Transverse colon (tissue), 4 donors: ENCODE measurements at regions of chr11 and their contacts with region 1.

Region 1: GRCh38 chr11:65919146-65920033 is at the start of gene DRAP1:
- DNase-seq: peak; percentile 99
- H3K4me3 ChIP-seq: peak within 1 kb of the TSS; percentile 84 to 98 (median 91)
- H3K27ac ChIP-seq: peak within 1 kb of the TSS; percentile 96 to 98 (median 96)
- H3K4me1 ChIP-seq: peaks cover 34 to 49% (median 46%) of the 10 kb centered on the region in 4 donors
- H3K27me3 ChIP-seq: no peaks in the 10 kb centered on the region
- CTCF ChIP-seq: no peak
- EP300 ChIP-seq: no peak
- POLR2A ChIP-seq: peak; percentile 54
- total RNA-seq, gene DRAP1: 15.7 to 63.2 (median 57.0) TPM

Region 2: DNA sequence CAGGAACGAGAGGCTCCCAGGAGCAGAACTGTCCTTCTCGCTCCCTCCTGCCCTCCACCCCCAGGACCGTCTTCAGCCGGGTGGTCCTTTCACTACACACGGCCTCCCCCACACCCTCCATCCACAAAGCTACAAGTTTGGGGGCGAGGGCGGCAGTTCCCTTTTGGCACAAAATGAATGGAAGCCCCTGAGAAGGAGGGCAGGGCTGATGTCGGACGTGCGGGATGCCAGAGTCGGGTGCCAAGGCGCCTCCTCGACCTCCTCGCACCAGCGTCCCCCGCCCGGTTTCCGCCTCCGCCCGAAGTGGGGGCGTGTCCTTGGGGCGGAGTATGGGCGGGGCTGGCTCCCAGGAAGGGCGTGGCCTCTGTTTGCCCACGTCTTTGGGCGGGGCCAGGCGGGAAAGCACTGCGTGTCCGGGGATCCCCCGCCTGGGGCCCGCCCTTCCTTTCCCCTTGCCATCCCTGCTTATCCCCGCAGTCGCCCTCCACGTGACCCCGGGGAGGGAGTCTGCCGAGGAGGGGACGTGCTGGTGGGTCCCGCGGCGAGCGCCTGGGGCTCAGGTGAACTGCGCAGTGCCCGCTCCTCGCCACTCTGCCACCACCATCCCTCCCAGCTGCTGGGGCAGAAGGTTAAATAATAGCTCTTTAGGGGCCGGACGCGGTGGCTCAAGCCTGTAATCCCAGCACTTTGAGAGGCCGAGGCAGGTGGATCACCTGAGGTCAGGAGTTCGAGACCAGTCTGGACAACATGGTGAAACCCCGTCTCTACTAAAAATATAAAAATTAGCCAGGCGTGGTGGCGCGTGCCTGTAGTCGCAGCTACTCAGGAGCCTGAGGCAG is 45.9 kb before region 1 on chr11:
- in situ Hi-C with region 1: no loop called
- intact Hi-C with region 1: no loop called
- DNase-seq: peak; percentile 97
- H3K4me3 ChIP-seq: peak overlapping the region; percentile 36 to 63 (median 50)
- H3K27ac ChIP-seq: peak overlapping the region; percentile 88 to 92 (median 90)
- H3K4me1 ChIP-seq: peaks cover 9 to 37% (median 20%) of the 10 kb centered on the region in 4 donors
- H3K27me3 ChIP-seq: no peaks in the 10 kb centered on the region
- CTCF ChIP-seq: no peak
- EP300 ChIP-seq: peak; percentile 40
- POLR2A ChIP-seq: peak; percentile 81

Region 3: DNA sequence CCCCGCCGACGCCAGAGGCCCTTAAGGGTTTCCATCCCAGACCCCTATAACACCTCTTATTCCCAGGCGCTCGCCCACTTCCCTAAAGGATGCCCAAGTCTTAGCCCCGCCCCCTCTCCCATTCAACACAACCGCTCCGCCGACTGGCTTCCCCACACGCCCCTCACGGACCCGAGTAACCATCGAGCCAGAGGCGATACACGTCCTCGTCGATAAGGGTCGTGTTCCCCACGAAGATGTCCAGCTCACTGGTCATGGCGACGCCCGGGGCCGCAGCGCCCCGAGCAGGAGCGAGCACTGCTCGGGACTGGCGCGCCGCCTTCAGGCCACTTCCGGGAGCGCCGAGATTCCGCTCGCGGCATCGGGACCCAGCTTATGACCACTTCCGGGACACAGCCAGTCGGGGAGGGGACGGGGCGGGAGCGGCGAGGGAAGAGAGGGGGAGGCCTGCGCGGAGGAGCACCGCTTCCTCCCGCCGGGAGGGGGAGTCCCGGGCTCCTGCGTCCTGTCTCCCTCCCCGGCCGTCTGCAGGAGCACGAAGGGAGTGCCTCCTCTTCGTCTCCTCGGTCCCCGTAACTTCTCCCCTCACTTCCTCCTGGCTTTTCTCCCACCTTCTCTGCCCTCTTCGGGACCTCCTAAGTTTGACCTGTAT is 31.1 kb before region 1 on chr11 and contains the start of gene FIBP:
- in situ Hi-C with region 1: no loop called
- intact Hi-C with region 1: loop called (anchors 2 kb)
- DNase-seq: peak; percentile 98
- H3K4me3 ChIP-seq: peak within 1 kb of the TSS; percentile 50 to 79 (median 54)
- H3K27ac ChIP-seq: peak within 1 kb of the TSS; percentile 95 to 99 (median 97)
- H3K4me1 ChIP-seq: peaks cover 36 to 70% (median 55%) of the 10 kb centered on the region in 4 donors
- H3K27me3 ChIP-seq: no peaks in the 10 kb centered on the region
- CTCF ChIP-seq: peak; percentile 77 to 99 (median 87)
- EP300 ChIP-seq: no peak
- POLR2A ChIP-seq: peak; percentile 94
- total RNA-seq, gene FIBP: 53.4 to 82.6 (median 75.9) TPM